HAP-1 (cell line): ENCODE measurements at regions of chr1 and their contacts with region 1.

Region 1: GRCh38 chr1:203486618-203487370 is 7.2 kb upstream of the OPTC start:
- DNase-seq: no peak
- H3K4me3 ChIP-seq: no peak overlapping the region; the same call in 1 of the 2 replicates
- H3K4me1 ChIP-seq: no peaks in the 10 kb centered on the region
- H3K27me3 ChIP-seq: no peaks in the 10 kb centered on the region

Region 2: GRCh38 chr1:203127666-203128430 is 358.9 kb before region 1 on chr1 and contains the start of gene ADORA1:
- in situ Hi-C with region 1: no loop called
- DNase-seq: peak; percentile 22 to 70
- H3K4me3 ChIP-seq: peak within 1 kb of the TSS; percentile 25
- H3K4me1 ChIP-seq: peaks cover 3% of the 10 kb centered on the region; the same call in 1 of the 2 replicates
- H3K27me3 ChIP-seq: peaks cover 48% of the 10 kb centered on the region

Region 3: DNA sequence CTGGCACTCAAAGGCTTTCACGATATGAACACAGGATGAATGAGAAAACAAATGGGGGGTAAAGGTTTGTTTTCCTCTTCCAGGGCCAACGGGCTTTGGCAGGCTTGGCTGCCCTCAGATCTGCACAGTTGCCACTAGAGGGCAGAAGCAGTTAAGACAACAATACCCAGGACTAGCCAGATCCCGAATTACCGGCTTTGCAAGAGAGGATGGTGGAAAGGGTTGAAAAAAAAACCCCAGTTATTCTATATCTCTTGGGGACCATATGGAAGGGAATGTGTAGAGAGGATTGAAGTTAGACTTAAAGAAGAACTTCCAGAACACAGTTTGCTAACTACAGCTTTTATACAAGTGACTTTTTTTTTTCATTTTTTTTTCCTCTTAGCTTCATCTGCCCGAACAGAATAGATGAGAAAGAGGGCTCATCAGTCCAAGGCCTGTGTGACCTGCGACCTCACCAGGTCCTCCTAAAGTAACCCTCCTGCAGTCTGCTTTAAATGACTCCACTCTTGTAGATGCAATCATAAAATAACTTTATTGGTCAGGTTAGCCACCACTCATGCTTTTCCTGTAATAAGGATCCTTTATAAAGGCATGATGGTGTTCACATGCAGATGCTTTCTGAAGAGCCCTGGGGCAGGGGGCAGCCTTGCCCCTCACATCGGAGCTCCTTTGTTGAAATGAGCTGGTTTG is 146.5 kb before region 1 on chr1:
- in situ Hi-C with region 1: loop called (anchors 5 kb)
- DNase-seq: peak; percentile 77 to 79
- H3K4me3 ChIP-seq: no peak overlapping the region
- H3K4me1 ChIP-seq: peaks cover 9% of the 10 kb centered on the region
- H3K27me3 ChIP-seq: peaks cover 8% of the 10 kb centered on the region